Right ventricle myocardium inferior (tissue), 1 donor: ENCODE measurements at regions of chr6 and their contacts with region 1.

Region 1: DNA sequence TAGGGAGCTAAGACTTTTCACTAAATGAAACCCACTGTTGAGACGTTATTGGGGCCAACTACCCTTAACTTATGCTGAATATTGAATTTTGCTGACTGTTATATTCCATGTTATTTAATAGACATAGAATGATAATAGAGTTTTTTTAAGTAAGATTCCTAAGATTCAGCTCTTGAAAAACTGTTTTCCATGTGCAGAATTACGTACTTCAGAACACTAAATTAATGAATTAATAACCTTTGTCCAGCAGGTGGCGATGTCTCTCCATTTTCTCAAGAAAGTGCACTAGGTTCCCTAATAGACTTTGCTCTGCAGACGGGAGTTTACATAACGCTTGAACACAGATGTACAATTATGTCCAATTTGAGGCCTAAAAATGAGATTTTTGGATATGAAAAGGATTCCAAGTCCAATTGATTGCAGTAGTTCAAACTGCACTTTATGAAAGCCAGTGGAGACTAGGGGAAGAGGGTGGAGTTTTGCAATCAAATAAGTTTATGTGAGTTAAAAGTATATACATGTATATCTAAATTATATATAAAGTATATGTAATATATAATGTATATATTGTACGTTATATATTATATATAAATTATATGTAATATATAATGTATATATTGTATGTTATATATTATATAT is 282.1 kb downstream of the UST start:
- DNase-seq: no peak
- ATAC-seq: peak; percentile 80

Region 2: GRCh38 chr6:148578245-148578732 is 450.6 kb before region 1 on chr6:
- intact Hi-C with region 1: loop called (anchors 5 kb)
- DNase-seq: peak; percentile 88
- ATAC-seq: peak; percentile 100

Region 3: GRCh38 chr6:149082286-149082707 is 53.4 kb after region 1 on chr6:
- intact Hi-C with region 1: loop called (anchors 5 kb)
- DNase-seq: peak; percentile 82
- ATAC-seq: peak; percentile 54

Region 4: GRCh38 chr6:149431905-149432775 is 403.3 kb after region 1 on chr6:
- intact Hi-C with region 1: loop called (anchors 2 kb)
- DNase-seq: peak; percentile 93
- ATAC-seq: peak; percentile 92

Region 5: GRCh38 chr6:149513915-149514314 is 485.0 kb after region 1 on chr6:
- intact Hi-C with region 1: loop called (anchors 2 kb)
- DNase-seq: no peak
- ATAC-seq: peak; percentile 28